BJ (cell line): ENCODE measurements at regions of chr2 and their contacts with region 1.

Region 1: GRCh38 chr2:68467077-68467960 is at the starts of genes APLF and FBXO48:
- DNase-seq: peak; percentile 97
- H3K4me3 ChIP-seq: peak within 1 kb of the TSS; percentile 90
- H3K27me3 ChIP-seq: no peaks in the 10 kb centered on the region; the same call in 1 of the 2 replicates
- CTCF ChIP-seq: no peak
- polyA plus RNA-seq, gene APLF: 1.2 and 3.0 TPM in 2 replicates
- polyA plus RNA-seq, gene FBXO48: 0.49 and 0.97 TPM in 2 replicates

Region 2: DNA sequence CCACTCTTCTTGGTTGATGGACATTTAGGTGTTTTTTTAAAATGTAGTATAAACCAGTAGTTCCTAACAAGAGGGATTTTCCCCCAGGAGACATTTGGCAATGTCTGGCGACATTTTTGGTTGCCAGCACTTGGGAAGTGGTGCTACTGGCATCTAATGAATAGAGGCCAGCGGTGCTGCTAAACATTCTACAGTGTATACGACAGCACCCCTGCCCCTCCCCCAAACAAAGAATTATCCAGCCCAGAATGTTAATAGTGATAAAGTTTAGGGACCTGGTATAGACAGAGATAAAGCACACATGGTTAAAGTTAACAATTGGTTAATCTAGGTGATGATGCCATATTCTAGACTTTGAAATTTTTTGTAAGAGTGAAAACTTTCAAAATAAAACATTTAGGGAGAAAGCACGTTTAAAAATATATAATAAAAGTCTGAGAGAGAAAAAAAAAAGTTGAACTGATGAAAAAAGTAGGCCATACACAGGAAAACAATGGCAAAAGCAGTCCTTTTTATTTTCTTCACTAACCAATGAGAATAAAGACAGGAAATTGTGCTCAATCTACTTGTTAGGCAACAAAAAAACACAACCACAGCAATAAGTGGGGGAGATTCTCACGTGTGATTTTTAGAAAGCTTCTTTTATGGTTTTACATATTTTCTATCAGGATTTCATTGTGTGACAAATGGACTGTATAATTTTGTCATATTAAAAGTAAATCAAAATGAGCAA is 15.0 kb before region 1 on chr2:
- CTCF ChIA-PET with region 1: interaction called, 16 read pairs
- POLR2A ChIA-PET with region 1: interaction called, 3 read pairs
- DNase-seq: no peak
- H3K4me3 ChIP-seq: no peak overlapping the region
- H3K27me3 ChIP-seq: no peaks in the 10 kb centered on the region
- CTCF ChIP-seq: no peak

Region 3: DNA sequence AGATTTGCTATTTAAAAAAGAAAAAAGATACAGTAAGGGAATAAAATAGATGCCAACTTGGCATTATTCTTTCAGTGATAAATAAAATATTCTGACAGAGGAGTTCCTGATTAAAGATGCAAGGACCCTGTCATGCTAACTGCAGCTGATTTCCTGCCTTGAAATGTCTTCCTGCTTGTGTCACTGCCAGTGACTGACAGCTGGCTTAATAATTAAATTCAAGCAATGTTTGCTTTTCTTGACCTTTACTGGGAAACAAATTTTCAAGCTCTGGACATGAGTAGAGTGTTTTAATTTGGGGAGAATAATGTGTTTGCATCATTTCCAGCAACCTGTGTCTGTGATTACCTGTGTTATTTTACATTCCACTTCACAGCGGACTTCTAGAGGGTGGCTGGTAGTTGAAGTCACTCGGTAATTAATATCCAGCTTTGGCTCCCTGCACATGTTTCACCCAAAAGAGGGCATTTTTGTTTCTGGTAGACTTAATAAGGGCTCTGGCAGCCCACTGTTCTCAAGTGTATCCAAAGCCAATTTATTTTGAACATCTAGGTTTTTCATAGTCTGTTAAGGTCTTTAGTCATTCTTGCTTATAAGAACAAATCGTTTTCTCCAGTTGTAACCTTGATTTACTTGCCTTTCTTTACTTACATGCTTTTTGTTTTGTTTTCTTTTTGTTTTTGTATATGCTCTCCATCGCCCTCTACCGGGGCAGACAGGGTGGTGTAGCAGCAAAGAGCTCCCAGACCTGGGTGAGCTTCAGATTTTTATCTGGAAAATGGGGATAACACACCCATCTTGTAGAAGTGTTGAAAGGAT is 127.6 kb after region 1 on chr2:
- CTCF ChIA-PET with region 1: interaction called, 69 read pairs
- POLR2A ChIA-PET with region 1: no interaction called
- DNase-seq: peak; percentile 2
- H3K4me3 ChIP-seq: no peak overlapping the region
- H3K27me3 ChIP-seq: no peaks in the 10 kb centered on the region
- CTCF ChIP-seq: peak; percentile 94

Region 4: DNA sequence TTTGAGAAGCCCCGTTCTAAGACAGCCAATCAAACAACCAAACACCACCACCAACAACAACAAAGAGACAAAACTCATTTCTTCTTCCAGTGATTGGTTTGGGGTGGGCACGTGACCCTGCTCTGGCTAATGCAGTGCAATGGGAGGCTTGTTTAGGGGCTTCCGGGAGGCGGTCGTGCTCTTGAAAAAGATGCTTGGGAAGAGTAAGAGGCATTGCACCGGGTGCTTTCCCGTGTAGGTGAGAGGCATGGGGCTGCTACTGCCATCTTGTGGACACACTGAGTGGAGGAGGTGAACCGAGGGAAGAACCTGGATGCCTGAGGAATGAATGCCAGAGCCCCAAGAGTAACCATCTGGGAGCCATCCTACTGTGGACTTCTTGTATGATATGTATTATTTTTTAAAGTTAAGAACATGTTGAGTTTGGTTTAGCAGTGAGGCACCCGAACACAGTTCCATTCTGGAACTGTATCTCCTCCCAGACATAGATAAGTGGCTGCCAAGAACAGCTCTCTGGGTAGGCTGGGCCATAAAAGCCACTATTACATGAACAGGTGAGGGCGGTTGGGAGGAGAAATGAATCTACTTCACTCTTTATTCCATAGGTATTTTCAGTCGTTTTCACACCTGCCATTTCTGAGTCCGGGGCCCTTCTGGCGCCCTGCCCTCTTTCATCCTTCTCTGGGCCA is 248.2 kb after region 1 on chr2:
- CTCF ChIA-PET with region 1: interaction called, 17 read pairs
- POLR2A ChIA-PET with region 1: no interaction called
- DNase-seq: no peak
- H3K4me3 ChIP-seq: no peak overlapping the region
- H3K27me3 ChIP-seq: no peaks in the 10 kb centered on the region; the same call in 1 of the 2 replicates
- CTCF ChIP-seq: peak; percentile 81

Region 5: GRCh38 chr2:68909793-68910674 is 442.7 kb after region 1 on chr2:
- CTCF ChIA-PET with region 1: interaction called, 12 read pairs
- POLR2A ChIA-PET with region 1: no interaction called
- DNase-seq: no peak
- H3K4me3 ChIP-seq: no peak overlapping the region
- H3K27me3 ChIP-seq: no peaks in the 10 kb centered on the region; the same call in 1 of the 2 replicates
- CTCF ChIP-seq: peak; percentile 93

Region 6: DNA sequence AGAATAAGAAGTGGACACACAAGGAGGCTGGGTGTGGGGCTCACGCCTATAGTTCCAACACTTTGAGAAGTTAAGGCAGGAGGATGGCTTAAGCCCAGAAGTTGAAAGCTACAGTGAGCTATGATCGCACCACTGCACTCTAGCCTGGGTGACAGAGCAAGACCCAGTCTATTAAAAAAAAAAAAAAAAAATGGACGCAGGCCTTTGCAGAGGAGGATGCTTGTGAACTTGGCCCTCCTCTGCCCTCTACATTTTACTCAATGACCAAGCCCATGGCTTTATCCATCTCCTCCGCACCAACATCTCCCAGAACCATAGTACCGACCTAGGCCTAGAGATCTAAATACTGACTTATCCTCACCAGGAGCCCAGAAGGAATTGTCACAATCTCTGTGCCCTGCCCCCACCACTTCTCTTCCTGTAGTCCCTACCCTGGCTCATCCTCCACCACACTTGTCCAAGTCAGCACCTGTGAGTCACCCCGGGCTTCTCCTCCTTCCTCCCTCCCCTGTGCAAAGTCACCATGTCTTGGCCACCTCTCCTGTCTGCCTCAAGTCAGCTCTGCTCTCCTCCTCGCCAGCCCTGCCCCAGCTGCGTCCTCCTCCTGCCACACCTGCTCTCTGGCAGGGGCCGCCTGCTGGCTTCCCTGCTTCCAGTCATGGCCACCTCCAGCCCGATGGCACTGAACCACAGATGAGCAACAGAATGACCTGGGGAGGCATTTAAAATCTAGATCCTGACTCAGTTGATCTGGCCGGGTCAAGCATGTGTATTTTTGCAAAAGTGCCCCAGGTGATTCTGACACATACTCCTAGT is 1529.9 kb after region 1 on chr2:
- CTCF ChIA-PET with region 1: no interaction called
- POLR2A ChIA-PET with region 1: no interaction called
- DNase-seq: peak; percentile 21
- H3K4me3 ChIP-seq: no peak overlapping the region
- H3K27me3 ChIP-seq: no peaks in the 10 kb centered on the region
- CTCF ChIP-seq: no peak